Activated T-helper 1 cell treated with anti-CD3 and anti-CD28 coated beads, Interleukin-12 subunit alpha, Interleukin-12 subunit beta, Interleukin-2, Interleukin-4 antibody, amounts not matched to agents 30 ng/mL and 10 ng/mL and 1 ng/mL, durations not matched to agents 14 hours and 24 hours and 36 hours (primary cell): ENCODE measurements at regions of chr19 and their contacts with region 1.

Region 1: DNA sequence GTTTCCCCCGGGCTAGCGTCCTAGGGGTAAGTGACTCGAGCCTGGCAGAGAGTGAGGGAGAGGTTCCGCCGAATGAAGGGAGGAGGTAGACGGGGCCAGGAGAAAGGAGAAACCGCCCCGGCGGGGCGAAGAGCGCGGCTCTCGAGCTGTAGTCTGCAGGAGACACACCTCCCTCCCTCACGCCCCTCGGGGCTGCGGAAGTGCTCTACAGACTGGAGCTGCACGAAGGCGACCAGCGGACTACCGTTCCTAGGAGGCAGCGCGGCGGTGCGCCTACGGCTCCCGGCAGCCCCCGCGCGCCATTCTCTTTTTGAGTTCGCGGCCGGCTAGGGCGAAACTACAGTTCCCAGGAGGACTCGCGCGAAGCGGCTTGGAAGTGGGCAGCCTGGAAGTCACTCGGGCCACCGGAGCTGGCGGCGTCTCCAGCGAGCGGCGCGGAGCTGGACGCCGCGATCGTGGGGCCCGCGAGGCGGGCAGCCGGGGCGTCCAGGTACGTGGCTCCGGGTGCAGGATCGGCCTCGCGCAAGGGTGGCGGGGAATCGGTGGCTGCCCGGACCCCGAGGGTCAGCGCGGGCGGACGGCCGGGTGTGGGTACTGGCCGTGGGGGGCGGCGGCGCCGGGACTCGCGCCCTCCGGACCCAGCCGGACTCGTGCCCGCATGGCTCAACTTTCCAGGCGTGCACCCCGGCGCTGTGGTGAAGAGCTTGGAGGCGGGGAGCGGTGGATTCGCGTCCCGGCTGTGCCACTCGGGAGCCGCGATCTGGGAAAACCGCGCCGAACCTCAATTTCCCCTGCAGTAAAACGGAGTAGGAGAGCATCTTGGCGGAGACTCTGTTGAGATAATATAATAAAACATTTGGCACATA is at the start of gene SIPA1L3:
- DNase-seq: peak; percentile 91
- H3K4me3 Mint-ChIP-seq: peak within 1 kb of the TSS; percentile 93
- H3K27ac Mint-ChIP-seq: peak within 1 kb of the TSS; percentile 68
- H3K4me1 Mint-ChIP-seq: peaks cover 17% of the 10 kb centered on the region
- H3K27me3 Mint-ChIP-seq: peaks cover 2% of the 10 kb centered on the region
- total RNA-seq, gene SIPA1L3: 16.7 and 18.4 TPM in 2 replicates

Region 2: GRCh38 chr19:37403403-37403802 is 503.7 kb before region 1 on chr19:
- intact Hi-C with region 1: no loop called
- DNase-seq: no peak
- H3K4me3 Mint-ChIP-seq: no peak overlapping the region
- H3K27ac Mint-ChIP-seq: no peak overlapping the region
- H3K4me1 Mint-ChIP-seq: no peaks in the 10 kb centered on the region
- H3K27me3 Mint-ChIP-seq: no peaks in the 10 kb centered on the region

Region 3: GRCh38 chr19:37466798-37467607 is 440.1 kb before region 1 on chr19 and contains the start of gene ZNF569:
- intact Hi-C with region 1: loop called (anchors 2 kb)
- DNase-seq: peak; percentile 85
- H3K4me3 Mint-ChIP-seq: peak within 1 kb of the TSS; percentile 92
- H3K27ac Mint-ChIP-seq: peak within 1 kb of the TSS; percentile 93
- H3K4me1 Mint-ChIP-seq: peaks cover 27% of the 10 kb centered on the region
- H3K27me3 Mint-ChIP-seq: no peaks in the 10 kb centered on the region
- total RNA-seq, gene ZNF569: 2.7 and 3.7 TPM in 2 replicates

Region 4: GRCh38 chr19:37779127-37780005 is 127.7 kb before region 1 on chr19 and contains the start of gene ZNF573:
- intact Hi-C with region 1: loop called (anchors 1 kb)
- DNase-seq: peak; percentile 73
- H3K4me3 Mint-ChIP-seq: peak within 1 kb of the TSS; percentile 95
- H3K27ac Mint-ChIP-seq: peak within 1 kb of the TSS; percentile 86
- H3K4me1 Mint-ChIP-seq: peaks cover 15% of the 10 kb centered on the region
- H3K27me3 Mint-ChIP-seq: no peaks in the 10 kb centered on the region
- total RNA-seq, gene ZNF573: 3.7 and 5.6 TPM in 2 replicates

Region 5: GRCh38 chr19:37855098-37855497 is 52.0 kb before region 1 on chr19:
- intact Hi-C with region 1: no loop called
- DNase-seq: no peak
- H3K4me3 Mint-ChIP-seq: no peak overlapping the region
- H3K27ac Mint-ChIP-seq: no peak overlapping the region
- H3K4me1 Mint-ChIP-seq: no peaks in the 10 kb centered on the region
- H3K27me3 Mint-ChIP-seq: no peaks in the 10 kb centered on the region

Region 6: GRCh38 chr19:38095411-38096308 is 188.6 kb after region 1 on chr19:
- intact Hi-C with region 1: loop called (anchors 1 kb)
- DNase-seq: peak; percentile 42
- H3K4me3 Mint-ChIP-seq: no peak overlapping the region
- H3K27ac Mint-ChIP-seq: no peak overlapping the region
- H3K4me1 Mint-ChIP-seq: peaks cover 5% of the 10 kb centered on the region
- H3K27me3 Mint-ChIP-seq: no peaks in the 10 kb centered on the region

Region 7: DNA sequence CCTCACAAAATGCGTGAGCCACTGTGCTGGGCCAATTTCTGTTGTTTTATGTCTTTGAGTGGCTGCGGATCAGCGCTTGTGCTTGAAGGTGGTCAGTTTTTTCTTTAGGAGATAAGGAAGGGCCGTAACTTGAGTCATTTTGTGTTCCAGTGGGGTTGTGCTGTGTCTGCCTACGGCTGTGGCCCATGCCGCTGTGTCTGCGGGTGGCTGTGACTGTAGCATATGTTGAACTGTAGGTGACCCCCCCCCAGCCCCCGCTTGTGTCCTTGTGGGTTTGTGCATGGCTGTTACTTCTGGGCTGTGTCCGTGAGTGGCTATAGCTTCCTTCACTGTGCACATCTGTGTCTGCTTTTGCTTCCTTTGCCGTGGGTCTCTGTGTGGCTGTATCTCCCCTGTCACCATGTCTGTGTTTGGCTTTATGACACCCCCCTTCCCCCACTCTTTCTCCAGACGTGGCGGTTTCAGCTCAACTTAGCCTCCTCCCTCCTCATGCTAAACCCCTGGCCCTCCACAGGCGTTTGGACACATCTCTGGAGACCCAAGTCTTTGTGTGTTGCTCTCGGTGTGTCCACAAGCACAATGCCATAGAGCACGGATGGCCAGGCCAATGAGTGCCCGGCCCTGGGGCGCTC is 348.4 kb after region 1 on chr19:
- intact Hi-C with region 1: loop called (anchors 1 kb)
- DNase-seq: no peak
- H3K4me3 Mint-ChIP-seq: peak overlapping the region; percentile 83
- H3K27ac Mint-ChIP-seq: peak overlapping the region; percentile 83
- H3K4me1 Mint-ChIP-seq: peaks cover 34% of the 10 kb centered on the region
- H3K27me3 Mint-ChIP-seq: peaks cover 8% of the 10 kb centered on the region

Region 8: GRCh38 chr19:38374429-38375176 is 467.5 kb after region 1 on chr19 and contains the start of gene PSMD8:
- intact Hi-C with region 1: loop called (anchors 1 kb)
- DNase-seq: peak; percentile 98
- H3K4me3 Mint-ChIP-seq: peak within 1 kb of the TSS; percentile 100
- H3K27ac Mint-ChIP-seq: peak within 1 kb of the TSS; percentile 99
- H3K4me1 Mint-ChIP-seq: peaks cover 31% of the 10 kb centered on the region
- H3K27me3 Mint-ChIP-seq: peaks cover 3% of the 10 kb centered on the region
- total RNA-seq, gene PSMD8: 292 and 298 TPM in 2 replicates